ENCODE measurements at regions of chr15 and their contacts with region 1.

Region 1: DNA sequence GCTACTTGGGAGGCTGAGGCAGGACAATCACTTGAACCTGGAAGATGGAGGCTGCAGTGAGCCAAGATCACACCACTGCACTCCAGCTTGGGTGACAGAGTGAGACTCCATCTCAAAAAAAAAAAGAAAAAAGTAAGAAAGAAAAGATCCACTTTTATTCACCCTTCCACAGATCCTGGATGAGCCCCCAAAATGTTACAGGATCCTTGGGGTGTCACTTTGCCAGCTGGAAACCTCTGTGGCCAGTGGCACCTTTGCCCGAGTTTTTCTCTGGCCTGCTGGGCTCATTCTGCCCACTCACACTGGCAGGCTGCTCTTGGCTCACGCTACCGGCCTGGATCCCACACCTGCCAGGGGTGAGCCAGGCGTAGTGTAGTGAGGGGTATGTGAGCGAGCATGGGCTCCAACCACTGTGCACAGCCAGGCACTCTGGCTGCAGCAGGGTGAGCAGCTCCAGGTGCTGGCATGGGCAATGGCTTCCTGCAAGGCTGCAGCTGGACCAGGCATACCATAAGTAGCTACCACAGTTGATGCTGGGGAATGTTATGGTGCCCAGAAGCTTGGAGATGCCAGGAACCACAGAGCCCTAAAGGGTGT is 57.8 kb upstream of the C15orf39 start:
- H3K4me3 ChIP-seq: no peak overlapping the region
- H3K27ac ChIP-seq: no peak overlapping the region
- H3K4me1 ChIP-seq: no peaks in the 10 kb centered on the region
- CTCF ChIP-seq: no peak

Region 2: GRCh38 chr15:75107908-75108838 is 35.7 kb before region 1 on chr15:
- CTCF ChIA-PET with region 1: no interaction called
- POLR2A ChIA-PET with region 1: interaction called, 10 read pairs
- H3K4me3 ChIP-seq: no peak overlapping the region
- H3K27ac ChIP-seq: no peak overlapping the region
- H3K4me1 ChIP-seq: no peaks in the 10 kb centered on the region
- CTCF ChIP-seq: no peak

Measured in HEK293 (cell line).